PC-3 (cell line): ENCODE measurements at regions of chr2 and their contacts with region 1.

Region 1: GRCh38 chr2:171529914-171530313 is 7.6 kb downstream of the CYBRD1 start:
- DNase-seq: peak; percentile 41
- ATAC-seq: no peak
- H3K4me3 ChIP-seq: no peak overlapping the region
- H3K27ac ChIP-seq: no peak overlapping the region
- H3K4me1 ChIP-seq: no peaks in the 10 kb centered on the region
- H3K27me3 ChIP-seq: peaks cover 10% of the 10 kb centered on the region
- CTCF ChIP-seq: peak; percentile 76

Region 2: DNA sequence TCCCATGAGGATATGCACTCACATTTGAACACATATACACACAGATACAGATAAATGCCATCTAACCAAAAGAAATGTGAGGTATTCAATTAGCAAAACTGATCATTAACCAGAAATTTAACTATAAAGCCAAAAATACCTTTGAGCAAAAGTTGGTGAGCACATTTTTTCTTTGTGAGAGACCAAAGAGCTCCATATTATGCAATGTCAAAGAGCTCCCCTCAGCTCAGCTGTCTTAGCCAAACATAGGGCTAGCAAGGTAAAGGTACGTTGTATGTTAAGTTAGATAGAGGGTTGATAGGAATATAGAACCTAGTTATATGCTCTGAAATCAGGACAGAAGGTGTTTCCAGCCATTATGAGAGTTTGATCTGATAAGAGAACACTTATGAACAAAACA is 36.2 kb after region 1 on chr2:
- CTCF ChIA-PET with region 1: no interaction called
- POLR2A ChIA-PET with region 1: interaction called, 10 read pairs
- intact Hi-C with region 1: no loop called
- DNase-seq: no peak
- ATAC-seq: no peak
- H3K4me3 ChIP-seq: no peak overlapping the region
- H3K27ac ChIP-seq: no peak overlapping the region
- H3K4me1 ChIP-seq: peaks cover 5% of the 10 kb centered on the region; the same call in 1 of the 2 replicates
- H3K27me3 ChIP-seq: no peaks in the 10 kb centered on the region
- CTCF ChIP-seq: no peak

Region 3: GRCh38 chr2:171615069-171615468 is 85.2 kb after region 1 on chr2:
- CTCF ChIA-PET with region 1: interaction called, 10 read pairs
- POLR2A ChIA-PET with region 1: no interaction called
- intact Hi-C with region 1: no loop called
- DNase-seq: no peak
- ATAC-seq: no peak
- H3K4me3 ChIP-seq: no peak overlapping the region
- H3K27ac ChIP-seq: no peak overlapping the region
- H3K4me1 ChIP-seq: no peaks in the 10 kb centered on the region
- H3K27me3 ChIP-seq: no peaks in the 10 kb centered on the region
- CTCF ChIP-seq: no peak

Region 4: GRCh38 chr2:171798252-171798741 is 268.4 kb after region 1 on chr2:
- CTCF ChIA-PET with region 1: no interaction called
- POLR2A ChIA-PET with region 1: no interaction called
- intact Hi-C with region 1: no loop called
- DNase-seq: peak; percentile 72
- ATAC-seq: peak; percentile 100
- H3K4me3 ChIP-seq: no peak overlapping the region
- H3K27ac ChIP-seq: peak overlapping the region; percentile 50
- H3K4me1 ChIP-seq: peaks cover 18% of the 10 kb centered on the region
- H3K27me3 ChIP-seq: no peaks in the 10 kb centered on the region
- CTCF ChIP-seq: 0 out of 2 replicates have a peak, but pooled peaks have one; percentile 9